Panc1 (cell line): ENCODE measurements at regions of chr1 and their contacts with region 1.

Region 1: GRCh38 chr1:211323156-211324063 is 3.2 kb upstream of the TRAF5 start:
- DNase-seq: peak; percentile 60
- ATAC-seq: peak; percentile 85
- H3K4me3 ChIP-seq: no peak overlapping the region
- H3K27ac ChIP-seq: no peak overlapping the region
- H3K4me1 ChIP-seq: peaks cover 7% of the 10 kb centered on the region
- H3K27me3 ChIP-seq: no peaks in the 10 kb centered on the region
- CTCF ChIP-seq: peak; percentile 96

Region 2: GRCh38 chr1:211382714-211383480 is 59.5 kb after region 1 on chr1:
- CTCF ChIA-PET with region 1: interaction called, 3 read pairs
- POLR2A ChIA-PET with region 1: no interaction called
- in situ Hi-C with region 1: no loop called
- intact Hi-C with region 1: loop called (anchors 10 kb)
- DNase-seq: peak; percentile 76
- ATAC-seq: peak; percentile 100
- H3K4me3 ChIP-seq: peak overlapping the region; percentile 76 to 81
- H3K27ac ChIP-seq: peak overlapping the region; percentile 96
- H3K4me1 ChIP-seq: 0 out of 2 replicates have a peak, but pooled peaks cover 6% of the 10 kb centered on the region
- H3K27me3 ChIP-seq: no peaks in the 10 kb centered on the region
- CTCF ChIP-seq: no peak

Region 3: DNA sequence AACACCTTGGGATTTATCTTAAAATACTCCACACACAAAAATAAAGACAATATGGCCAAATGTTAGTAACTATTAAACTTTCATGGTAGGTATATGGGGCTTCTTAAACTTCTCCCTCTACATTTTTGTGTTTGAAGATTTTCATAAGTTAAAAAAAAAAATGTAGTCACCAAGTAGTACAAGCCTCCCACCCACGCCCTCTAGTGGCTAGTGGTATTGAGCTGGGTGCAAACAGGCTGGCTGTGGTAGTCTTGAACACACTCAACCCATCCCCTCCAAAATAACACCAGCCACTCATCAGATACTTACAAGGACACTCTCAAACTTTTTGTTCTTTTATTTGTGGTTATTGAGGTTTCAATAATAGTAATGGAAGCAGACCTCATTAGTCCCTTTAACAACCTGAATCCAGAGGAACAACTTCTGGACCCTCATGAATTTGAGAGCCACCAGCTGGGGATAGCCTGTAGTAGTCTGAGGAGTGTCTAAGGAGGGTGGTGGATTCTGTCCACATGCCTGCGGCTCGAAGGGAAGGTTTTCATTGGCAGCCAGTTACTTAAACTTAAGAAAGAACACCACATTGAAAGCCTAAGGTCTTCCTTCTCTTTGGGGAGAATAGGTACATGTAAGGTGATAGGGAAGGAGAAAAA is 152.9 kb after region 1 on chr1:
- CTCF ChIA-PET with region 1: no interaction called
- POLR2A ChIA-PET with region 1: no interaction called
- in situ Hi-C with region 1: no loop called
- intact Hi-C with region 1: loop called (anchors 5 kb)
- DNase-seq: peak; percentile 50
- ATAC-seq: peak; percentile 92
- H3K4me3 ChIP-seq: no peak overlapping the region
- H3K27ac ChIP-seq: no peak overlapping the region
- H3K4me1 ChIP-seq: no peaks in the 10 kb centered on the region
- H3K27me3 ChIP-seq: peaks cover 3% of the 10 kb centered on the region; the same call in 1 of the 2 replicates
- CTCF ChIP-seq: peak; percentile 94

Region 4: DNA sequence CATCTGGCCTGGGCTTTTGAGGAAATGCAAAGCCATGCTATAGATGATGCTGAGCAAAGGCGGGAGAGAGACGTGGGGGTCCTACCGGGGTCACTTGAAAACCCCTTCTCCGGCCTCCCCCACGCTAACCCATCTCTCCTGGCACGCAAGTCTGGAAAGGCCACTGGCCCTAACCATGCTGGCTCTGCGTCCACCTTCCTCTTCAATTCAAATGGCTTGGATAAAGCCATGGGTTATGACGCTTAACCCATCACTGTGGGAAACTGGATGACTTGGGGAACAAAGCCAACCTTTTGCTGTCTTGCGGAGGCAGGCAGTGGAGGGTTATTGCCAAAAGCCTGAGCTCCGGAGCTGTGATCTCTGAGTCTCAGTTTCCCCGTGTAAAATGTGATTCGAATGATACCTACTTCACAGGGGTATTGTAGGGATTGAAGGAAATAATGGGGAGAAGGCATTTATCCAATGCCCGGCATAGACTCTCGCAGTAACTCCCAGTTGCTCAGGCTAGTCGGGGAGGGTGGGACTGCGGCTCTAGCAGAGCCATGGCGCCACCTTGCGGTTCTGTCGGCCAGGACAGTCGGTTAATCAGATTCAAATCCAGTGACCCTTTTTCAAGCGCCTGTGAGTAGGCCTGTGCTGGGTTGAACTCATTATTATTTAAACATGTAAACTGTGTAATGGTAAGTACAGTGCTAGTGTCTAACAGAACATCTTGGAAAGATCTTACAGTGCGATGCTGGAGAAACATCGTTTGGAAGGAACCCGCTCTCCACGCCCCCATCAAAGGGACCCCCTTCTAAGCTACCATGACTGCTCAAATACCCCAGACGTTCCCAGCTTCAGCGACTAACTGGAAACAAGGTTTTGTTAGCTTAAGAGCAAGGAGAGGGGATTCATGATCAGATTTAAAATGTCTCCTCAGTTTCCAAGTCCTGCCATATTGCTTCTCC is 331.7 kb after region 1 on chr1:
- CTCF ChIA-PET with region 1: no interaction called
- POLR2A ChIA-PET with region 1: no interaction called
- in situ Hi-C with region 1: no loop called
- intact Hi-C with region 1: loop called (anchors 5 kb)
- DNase-seq: no peak
- ATAC-seq: peak; percentile 94
- H3K4me3 ChIP-seq: no peak overlapping the region
- H3K27ac ChIP-seq: peak overlapping the region; percentile 36
- H3K4me1 ChIP-seq: peaks cover 15% of the 10 kb centered on the region
- H3K27me3 ChIP-seq: no peaks in the 10 kb centered on the region
- CTCF ChIP-seq: peak; percentile 95